ENCODE measurements at regions of chr2 and their contacts with region 1.

Region 1: DNA sequence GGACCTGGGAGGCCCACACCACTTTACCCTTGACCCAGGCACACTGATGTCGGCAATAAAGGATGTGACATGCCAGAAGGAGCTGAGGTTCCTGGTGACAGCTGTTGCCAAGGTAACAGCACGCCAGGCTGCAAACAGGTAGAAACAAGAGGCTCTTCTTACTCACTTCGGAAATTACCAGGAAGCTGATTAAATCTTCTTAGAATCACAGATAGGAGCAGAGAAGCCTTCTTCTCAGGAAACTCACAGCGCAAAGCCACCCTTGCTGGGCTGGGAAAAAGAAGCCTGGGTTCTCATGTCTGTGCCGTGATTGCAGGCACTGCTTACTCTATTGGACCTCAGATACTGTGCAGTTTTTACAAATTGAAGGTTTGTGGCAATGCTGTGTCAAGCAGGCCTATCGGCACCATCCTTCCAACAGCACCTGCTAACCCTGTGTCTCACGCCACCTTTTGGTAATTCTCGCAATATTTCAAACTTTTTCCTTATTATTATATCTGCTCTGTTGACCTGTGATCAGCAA is 61.0 kb upstream of the TAF1B start:
- DNase-seq: peak in 8 of 9 donors; percentile 32 to 75 (median 65)
- ATAC-seq: peak; percentile 86
- H3K4me3 ChIP-seq: no peak overlapping the region
- H3K4me3 Mint-ChIP-seq: peak overlapping the region in 9 of 10 donors; percentile 4 to 63 (median 31)
- H3K27ac ChIP-seq: peak overlapping the region; percentile 56
- H3K27ac Mint-ChIP-seq: peak overlapping the region; percentile 45 to 94 (median 88)
- H3K4me1 ChIP-seq: peaks cover 31 to 43% of the 10 kb centered on the region in 2 donors
- H3K4me1 Mint-ChIP-seq: peaks cover 23 to 68% (median 49%) of the 10 kb centered on the region in 7 donors
- H3K27me3 ChIP-seq: no peaks in the 10 kb centered on the region
- H3K27me3 Mint-ChIP-seq: no peaks in the 10 kb centered on the region

Region 2: GRCh38 chr2:9205963-9206948 is 576.0 kb before region 1 on chr2 and contains the start of gene ASAP2:
- CTCF ChIA-PET with region 1: no interaction called
- POLR2A ChIA-PET with region 1: no interaction called
- intact Hi-C with region 1: loop called in 1 of 2 experiments (anchors 5 kb)
- DNase-seq: peak in 4 of 9 donors; percentile 7 to 71 (median 26)
- ATAC-seq: peak; percentile 80
- H3K4me3 ChIP-seq: no peak within 1 kb of the TSS
- H3K4me3 Mint-ChIP-seq: peak within 1 kb of the TSS; percentile 28 to 74 (median 64)
- H3K27ac ChIP-seq: no peak within 1 kb of the TSS
- H3K27ac Mint-ChIP-seq: no peak within 1 kb of the TSS
- H3K4me1 ChIP-seq: no peaks in the 10 kb centered on the region
- H3K4me1 Mint-ChIP-seq: peaks cover 0 to 10% (median 6%) of the 10 kb centered on the region in 7 donors
- H3K27me3 ChIP-seq: peaks cover 0 to 12% of the 10 kb centered on the region in 2 donors
- H3K27me3 Mint-ChIP-seq: peaks cover 33 to 60% (median 57%) of the 10 kb centered on the region in 5 donors
- total RNA-seq, gene ASAP2: 0.10 to 1.2 (median 0.45) TPM in 3 of 5 experiments, not detected in the others

Region 3: DNA sequence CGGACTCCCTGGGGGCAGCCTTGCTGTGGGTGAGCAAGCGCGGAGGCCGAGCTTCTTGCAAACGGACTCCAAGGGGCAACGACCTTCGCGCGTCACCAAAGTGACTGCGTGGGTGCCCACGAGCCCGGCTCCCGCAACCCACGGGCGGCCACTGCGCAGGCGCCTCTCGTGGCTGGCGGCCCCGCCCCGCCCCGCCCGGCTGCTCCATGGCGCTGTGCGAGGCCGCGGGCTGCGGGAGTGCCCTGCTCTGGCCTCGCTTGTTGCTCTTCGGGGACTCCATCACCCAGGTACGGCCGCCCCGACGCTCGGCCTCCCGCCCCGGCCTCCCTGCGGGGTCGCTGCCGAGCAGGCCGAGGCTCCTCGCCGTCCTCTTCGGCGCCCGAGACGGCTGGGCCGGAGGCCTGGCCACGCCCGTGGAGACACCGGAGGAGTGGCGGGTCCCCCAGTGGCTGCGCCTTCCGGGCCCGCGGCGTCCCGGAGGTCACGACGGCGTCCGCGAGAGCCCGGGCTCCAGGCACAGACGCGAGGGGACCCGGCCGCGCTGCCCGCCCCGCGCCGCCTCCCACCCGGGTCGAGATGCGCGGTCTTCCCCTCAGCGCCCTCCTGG is 307.8 kb before region 1 on chr2 and contains the start of gene IAH1:
- CTCF ChIA-PET with region 1: no interaction called
- POLR2A ChIA-PET with region 1: no interaction called
- intact Hi-C with region 1: loop called in 1 of 2 experiments (anchors 1 kb)
- DNase-seq: peak in 8 of 9 donors; percentile 66 to 81 (median 78)
- ATAC-seq: peak; percentile 89
- H3K4me3 ChIP-seq: peak within 1 kb of the TSS; percentile 82
- H3K4me3 Mint-ChIP-seq: peak within 1 kb of the TSS; percentile 81 to 89 (median 84)
- H3K27ac ChIP-seq: peak within 1 kb of the TSS; percentile 95
- H3K27ac Mint-ChIP-seq: peak within 1 kb of the TSS; percentile 83 to 95 (median 88)
- H3K4me1 ChIP-seq: peaks cover 11 to 21% of the 10 kb centered on the region in 2 donors
- H3K4me1 Mint-ChIP-seq: peaks cover 20 to 53% (median 45%) of the 10 kb centered on the region in 7 donors
- H3K27me3 ChIP-seq: no peaks in the 10 kb centered on the region
- H3K27me3 Mint-ChIP-seq: no peaks in the 10 kb centered on the region
- total RNA-seq, gene IAH1: 43.9 to 62.7 (median 49.7) TPM

Region 4: GRCh38 chr2:9656270-9656766 is 125.9 kb before region 1 on chr2:
- CTCF ChIA-PET with region 1: no interaction called
- POLR2A ChIA-PET with region 1: no interaction called
- intact Hi-C with region 1: loop called in 1 of 2 experiments (anchors 1 kb)
- DNase-seq: peak in 1 of 9 donors; percentile 63
- ATAC-seq: peak; percentile 86
- H3K4me3 ChIP-seq: no peak overlapping the region
- H3K4me3 Mint-ChIP-seq: peak overlapping the region in 1 of 10 donors; percentile 68
- H3K27ac ChIP-seq: no peak overlapping the region
- H3K27ac Mint-ChIP-seq: peak overlapping the region in 1 of 9 donors; percentile 83
- H3K4me1 ChIP-seq: peaks cover 0 to 11% of the 10 kb centered on the region in 2 donors
- H3K4me1 Mint-ChIP-seq: peaks cover 0 to 36% (median 0%) of the 10 kb centered on the region in 7 donors
- H3K27me3 ChIP-seq: no peaks in the 10 kb centered on the region
- H3K27me3 Mint-ChIP-seq: peaks cover 0 to 8% (median 0%) of the 10 kb centered on the region in 5 donors

Region 5: DNA sequence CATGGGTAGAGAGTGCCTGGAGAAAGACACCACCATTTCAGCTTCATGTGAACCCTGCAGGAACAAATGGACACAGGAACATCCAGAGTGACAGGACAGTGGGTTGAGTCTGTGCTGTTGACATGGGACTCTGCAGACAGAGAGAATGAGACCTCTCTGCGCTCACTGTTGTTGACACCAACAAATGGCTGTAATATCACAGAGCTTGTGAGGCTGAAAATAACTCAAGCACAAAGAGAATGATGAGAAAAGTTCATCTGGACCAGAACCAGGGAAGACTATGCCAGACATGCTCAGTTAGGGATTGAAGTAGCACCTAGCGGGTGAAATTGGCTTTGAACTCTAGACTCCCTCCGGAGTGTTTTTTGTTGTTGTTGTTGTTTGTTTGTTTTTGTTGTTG is 114.4 kb before region 1 on chr2:
- CTCF ChIA-PET with region 1: no interaction called
- POLR2A ChIA-PET with region 1: no interaction called
- intact Hi-C with region 1: no loop called
- DNase-seq: no peak
- ATAC-seq: no peak
- H3K4me3 ChIP-seq: no peak overlapping the region
- H3K4me3 Mint-ChIP-seq: no peak overlapping the region
- H3K27ac ChIP-seq: no peak overlapping the region
- H3K27ac Mint-ChIP-seq: peak overlapping the region in 1 of 9 donors; percentile 72
- H3K4me1 ChIP-seq: no peaks in the 10 kb centered on the region
- H3K4me1 Mint-ChIP-seq: peaks cover 0 to 4% (median 0%) of the 10 kb centered on the region in 7 donors
- H3K27me3 ChIP-seq: no peaks in the 10 kb centered on the region
- H3K27me3 Mint-ChIP-seq: peaks cover 0 to 15% (median 0%) of the 10 kb centered on the region in 5 donors

Region 6: DNA sequence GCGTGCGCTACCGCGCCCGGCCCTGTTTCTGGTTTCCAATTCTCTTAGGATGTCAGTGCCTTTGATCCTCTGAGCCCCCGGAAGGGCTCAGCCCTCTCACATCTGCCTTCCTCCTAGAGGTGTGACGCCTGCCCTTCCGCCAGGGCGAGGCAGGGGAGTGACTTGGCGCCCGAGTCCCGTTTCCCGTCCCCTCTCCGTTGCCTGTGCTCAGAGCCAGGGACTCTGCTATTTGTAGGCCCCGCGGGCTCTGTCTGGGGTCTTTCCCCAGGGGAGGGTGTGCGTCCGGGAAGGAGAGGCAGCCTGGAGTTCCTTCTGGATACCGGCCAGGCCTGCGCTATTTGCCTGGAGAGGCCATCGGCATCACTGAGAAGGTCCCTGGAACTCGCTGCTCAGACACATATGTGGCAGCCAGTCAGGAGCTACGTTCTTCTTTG is 42.7 kb before region 1 on chr2:
- CTCF ChIA-PET with region 1: interaction called, 4 read pairs
- POLR2A ChIA-PET with region 1: no interaction called
- intact Hi-C with region 1: loop called (anchors 1 to 5 kb)
- DNase-seq: peak in 7 of 9 donors; percentile 18 to 53 (median 36)
- ATAC-seq: peak; percentile 70
- H3K4me3 ChIP-seq: peak overlapping the region; percentile 45
- H3K4me3 Mint-ChIP-seq: peak overlapping the region; percentile 75 to 94 (median 86)
- H3K27ac ChIP-seq: peak overlapping the region; percentile 32
- H3K27ac Mint-ChIP-seq: peak overlapping the region; percentile 77 to 96 (median 92)
- H3K4me1 ChIP-seq: peaks cover 32 to 42% of the 10 kb centered on the region in 2 donors
- H3K4me1 Mint-ChIP-seq: peaks cover 32 to 58% (median 41%) of the 10 kb centered on the region in 7 donors
- H3K27me3 ChIP-seq: no peaks in the 10 kb centered on the region
- H3K27me3 Mint-ChIP-seq: peaks cover 0 to 5% (median 0%) of the 10 kb centered on the region in 5 donors

Region 7: DNA sequence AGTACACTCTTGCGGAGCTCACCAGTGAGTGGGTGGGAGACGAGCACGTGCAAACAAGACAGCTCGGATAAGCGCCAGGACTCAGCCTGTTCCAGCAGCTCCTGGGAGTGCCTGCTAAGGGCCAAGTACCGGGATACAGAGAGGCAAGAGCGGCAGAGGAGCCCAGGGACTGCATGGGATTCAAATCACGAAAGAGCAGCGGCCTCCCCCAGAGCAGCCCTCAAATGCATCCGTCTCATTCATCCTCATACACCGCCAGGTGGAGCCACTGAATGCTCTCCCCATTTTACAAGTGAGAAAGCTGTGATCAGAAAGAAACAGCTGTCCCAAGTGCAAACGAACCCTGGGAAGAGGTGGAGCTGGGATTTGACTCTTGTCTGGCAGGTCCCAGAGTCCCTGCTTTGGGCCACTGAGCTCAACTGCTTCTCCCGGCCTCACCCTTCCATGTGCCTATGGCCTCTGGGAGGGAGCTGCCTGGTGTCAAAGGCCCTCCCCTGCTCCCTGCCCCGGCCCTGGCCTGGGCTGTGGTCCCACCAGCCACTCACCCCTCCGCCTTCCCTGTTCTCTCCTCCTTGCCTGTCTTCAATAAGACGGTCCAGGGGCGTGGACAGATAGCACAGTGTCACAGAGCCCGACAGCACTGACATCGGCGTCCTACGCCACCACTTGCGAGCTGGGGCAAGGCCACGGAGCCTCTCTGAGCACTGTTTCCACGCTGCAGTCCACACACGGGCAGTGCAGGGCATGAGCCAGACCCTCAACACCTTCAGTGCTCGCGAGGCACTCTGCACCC is 11.8 kb before region 1 on chr2:
- CTCF ChIA-PET with region 1: interaction called, 3 read pairs
- POLR2A ChIA-PET with region 1: no interaction called
- intact Hi-C with region 1: loop called in 1 of 2 experiments (anchors 1 kb)
- DNase-seq: peak in 4 of 9 donors; percentile 12 to 30 (median 24)
- ATAC-seq: peak; percentile 69
- H3K4me3 ChIP-seq: no peak overlapping the region
- H3K4me3 Mint-ChIP-seq: no peak overlapping the region
- H3K27ac ChIP-seq: no peak overlapping the region
- H3K27ac Mint-ChIP-seq: no peak overlapping the region
- H3K4me1 ChIP-seq: peaks cover 0 to 8% of the 10 kb centered on the region in 2 donors
- H3K4me1 Mint-ChIP-seq: peaks cover 0 to 16% (median 6%) of the 10 kb centered on the region in 7 donors
- H3K27me3 ChIP-seq: no peaks in the 10 kb centered on the region
- H3K27me3 Mint-ChIP-seq: peaks cover 0 to 3% (median 0%) of the 10 kb centered on the region in 5 donors

Region 8: DNA sequence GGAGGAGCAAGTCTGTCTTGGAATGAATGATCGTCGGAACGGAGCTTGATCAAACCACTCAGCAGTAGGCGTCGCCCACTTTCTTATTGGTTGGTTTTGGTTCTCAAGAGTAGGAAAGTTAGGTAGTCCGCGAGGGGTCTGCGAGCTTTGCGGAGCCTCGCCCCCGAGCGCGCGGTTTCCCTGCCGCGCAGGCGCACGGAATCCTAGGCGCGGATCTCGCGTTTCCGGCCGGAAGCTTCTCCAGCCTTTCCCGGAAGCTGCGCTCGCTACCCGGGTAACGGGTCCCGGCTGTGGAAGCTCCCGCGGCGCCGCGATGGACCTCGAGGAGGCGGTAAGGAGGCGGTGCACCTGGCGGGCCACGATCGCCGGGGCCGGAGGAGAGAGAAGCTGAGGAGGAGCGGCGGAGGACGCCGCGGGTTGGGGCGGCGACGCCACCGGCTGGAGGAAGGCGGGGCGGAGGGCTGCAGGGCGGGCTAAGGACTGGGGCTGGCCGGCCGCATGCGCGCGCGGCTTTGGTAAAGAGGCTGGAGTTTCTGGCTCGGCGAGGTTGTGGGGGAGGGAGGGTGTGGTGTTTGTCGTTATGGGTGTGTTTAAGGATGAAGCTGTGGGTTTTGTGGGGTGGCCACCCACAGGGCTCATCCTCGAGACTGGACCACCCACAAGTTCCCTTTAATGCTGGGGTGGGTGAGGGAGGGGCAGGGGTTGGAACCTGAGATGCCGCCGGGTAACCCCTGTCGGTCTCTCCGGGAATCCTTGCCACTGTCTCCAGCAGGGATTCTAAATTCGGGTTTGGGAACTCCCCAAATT is 61.2 kb after region 1 on chr2 and contains the start of gene TAF1B:
- CTCF ChIA-PET with region 1: no interaction called
- POLR2A ChIA-PET with region 1: no interaction called
- intact Hi-C with region 1: loop called in 1 of 2 experiments (anchors 5 kb)
- DNase-seq: peak; percentile 55 to 89 (median 80)
- ATAC-seq: peak; percentile 87
- H3K4me3 ChIP-seq: peak within 1 kb of the TSS; percentile 85
- H3K4me3 Mint-ChIP-seq: peak within 1 kb of the TSS; percentile 89 to 95 (median 93)
- H3K27ac ChIP-seq: peak within 1 kb of the TSS; percentile 72
- H3K27ac Mint-ChIP-seq: peak within 1 kb of the TSS; percentile 74 to 97 (median 92)
- H3K4me1 ChIP-seq: peaks cover 11 to 13% of the 10 kb centered on the region in 2 donors
- H3K4me1 Mint-ChIP-seq: peaks cover 25 to 56% (median 48%) of the 10 kb centered on the region in 7 donors
- H3K27me3 ChIP-seq: no peaks in the 10 kb centered on the region
- H3K27me3 Mint-ChIP-seq: peaks cover 0 to 6% (median 0%) of the 10 kb centered on the region in 5 donors
- total RNA-seq, gene TAF1B: 9.2 to 28.2 (median 20.9) TPM